Activated CD4-positive, alpha-beta T cell treated with anti-CD3 and anti-CD28 coated beads for 36 hours (primary cell): ENCODE measurements at regions of chr15 and their contacts with region 1.

Region 1: GRCh38 chr15:41774062-41774881 is at the start of gene MAPKBP1:
- DNase-seq: peak; percentile 99
- ATAC-seq: peak; percentile 88
- H3K4me3 Mint-ChIP-seq: peak within 1 kb of the TSS; percentile 90
- H3K27ac Mint-ChIP-seq: peak within 1 kb of the TSS; percentile 84
- H3K4me1 Mint-ChIP-seq: peaks cover 56% of the 10 kb centered on the region
- H3K27me3 Mint-ChIP-seq: no peaks in the 10 kb centered on the region
- total RNA-seq, gene MAPKBP1: 16.1 to 19.0 TPM

Region 2: DNA sequence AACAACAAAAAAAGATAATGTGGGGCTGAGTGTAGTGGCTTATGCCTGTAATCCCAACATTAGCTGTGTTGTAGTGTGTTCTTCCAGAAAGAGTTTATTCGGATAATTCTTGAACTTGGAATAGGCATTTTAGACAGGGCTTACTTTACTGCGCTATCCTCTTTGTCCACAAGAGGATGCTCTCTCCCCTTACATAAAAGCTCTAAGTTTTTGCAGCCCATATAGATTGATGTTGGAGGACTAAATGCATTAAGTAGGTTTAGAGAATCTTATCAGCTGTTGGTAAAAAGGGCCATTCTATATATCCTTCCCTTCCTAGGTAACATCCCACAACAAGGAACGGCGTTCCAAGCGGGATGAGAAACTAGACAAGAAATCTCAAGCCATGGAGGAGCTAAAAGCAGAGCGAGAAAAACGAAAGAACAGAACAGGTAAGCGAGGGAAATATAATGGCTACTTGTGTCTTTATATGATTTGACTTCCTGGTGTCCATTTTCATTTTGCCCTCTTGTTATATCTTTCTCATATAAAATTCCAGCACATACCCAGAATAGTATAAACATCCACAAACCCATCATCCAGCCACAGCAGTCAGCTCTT is 308.4 kb before region 1 on chr15:
- CTCF ChIA-PET with region 1: interaction called, 17 read pairs
- POLR2A ChIA-PET with region 1: no interaction called
- intact Hi-C with region 1: no loop called
- DNase-seq: peak; percentile 34
- ATAC-seq: peak; percentile 81
- H3K4me3 Mint-ChIP-seq: no peak overlapping the region
- H3K27ac Mint-ChIP-seq: no peak overlapping the region
- H3K4me1 Mint-ChIP-seq: no peaks in the 10 kb centered on the region
- H3K27me3 Mint-ChIP-seq: no peaks in the 10 kb centered on the region

Region 3: GRCh38 chr15:41557673-41558399 is 216.4 kb before region 1 on chr15:
- CTCF ChIA-PET with region 1: interaction called, 10 read pairs
- POLR2A ChIA-PET with region 1: no interaction called
- intact Hi-C with region 1: loop called in 1 of 2 experiments (anchors 1 kb)
- DNase-seq: peak; percentile 85
- ATAC-seq: peak; percentile 75
- H3K4me3 Mint-ChIP-seq: peak overlapping the region; percentile 69
- H3K27ac Mint-ChIP-seq: peak overlapping the region; percentile 45
- H3K4me1 Mint-ChIP-seq: peaks cover 20% of the 10 kb centered on the region
- H3K27me3 Mint-ChIP-seq: peaks cover 10% of the 10 kb centered on the region

Region 4: GRCh38 chr15:41790756-41791546 is 16.7 kb after region 1 on chr15:
- CTCF ChIA-PET with region 1: interaction called, 22 read pairs
- POLR2A ChIA-PET with region 1: no interaction called
- intact Hi-C with region 1: no loop called
- DNase-seq: no peak
- ATAC-seq: peak; percentile 30
- H3K4me3 Mint-ChIP-seq: no peak overlapping the region
- H3K27ac Mint-ChIP-seq: no peak overlapping the region
- H3K4me1 Mint-ChIP-seq: peaks cover 43% of the 10 kb centered on the region
- H3K27me3 Mint-ChIP-seq: no peaks in the 10 kb centered on the region

Region 5: DNA sequence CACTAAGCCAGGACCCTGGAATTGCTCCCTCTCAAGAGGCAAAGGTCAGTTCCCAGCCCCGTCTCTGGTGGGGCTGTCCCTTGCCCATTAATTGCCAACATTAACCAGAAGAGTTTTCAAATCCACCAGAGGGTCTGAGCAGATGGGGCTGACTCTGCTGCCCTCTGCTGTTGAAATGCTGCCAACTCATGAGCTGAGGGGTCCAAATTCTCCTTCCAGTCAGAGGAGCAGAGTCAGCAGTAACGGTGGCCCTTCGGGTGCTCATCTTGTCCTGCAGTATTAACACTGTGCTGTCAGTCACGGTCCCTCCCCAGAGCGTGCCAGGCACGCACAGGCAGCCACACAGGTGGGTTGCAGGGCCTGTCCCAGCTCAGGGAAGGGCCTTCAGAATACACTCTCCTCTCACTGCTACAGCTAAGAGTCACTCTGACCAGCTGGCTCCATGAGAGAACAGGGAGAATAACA is 130.3 kb after region 1 on chr15:
- CTCF ChIA-PET with region 1: interaction called, 28 read pairs
- POLR2A ChIA-PET with region 1: interaction called, 3 read pairs
- intact Hi-C with region 1: loop called (anchors 1 kb)
- DNase-seq: peak; percentile 81
- ATAC-seq: peak; percentile 92
- H3K4me3 Mint-ChIP-seq: no peak overlapping the region
- H3K27ac Mint-ChIP-seq: peak overlapping the region; percentile 4
- H3K4me1 Mint-ChIP-seq: peaks cover 5% of the 10 kb centered on the region
- H3K27me3 Mint-ChIP-seq: no peaks in the 10 kb centered on the region

Region 6: DNA sequence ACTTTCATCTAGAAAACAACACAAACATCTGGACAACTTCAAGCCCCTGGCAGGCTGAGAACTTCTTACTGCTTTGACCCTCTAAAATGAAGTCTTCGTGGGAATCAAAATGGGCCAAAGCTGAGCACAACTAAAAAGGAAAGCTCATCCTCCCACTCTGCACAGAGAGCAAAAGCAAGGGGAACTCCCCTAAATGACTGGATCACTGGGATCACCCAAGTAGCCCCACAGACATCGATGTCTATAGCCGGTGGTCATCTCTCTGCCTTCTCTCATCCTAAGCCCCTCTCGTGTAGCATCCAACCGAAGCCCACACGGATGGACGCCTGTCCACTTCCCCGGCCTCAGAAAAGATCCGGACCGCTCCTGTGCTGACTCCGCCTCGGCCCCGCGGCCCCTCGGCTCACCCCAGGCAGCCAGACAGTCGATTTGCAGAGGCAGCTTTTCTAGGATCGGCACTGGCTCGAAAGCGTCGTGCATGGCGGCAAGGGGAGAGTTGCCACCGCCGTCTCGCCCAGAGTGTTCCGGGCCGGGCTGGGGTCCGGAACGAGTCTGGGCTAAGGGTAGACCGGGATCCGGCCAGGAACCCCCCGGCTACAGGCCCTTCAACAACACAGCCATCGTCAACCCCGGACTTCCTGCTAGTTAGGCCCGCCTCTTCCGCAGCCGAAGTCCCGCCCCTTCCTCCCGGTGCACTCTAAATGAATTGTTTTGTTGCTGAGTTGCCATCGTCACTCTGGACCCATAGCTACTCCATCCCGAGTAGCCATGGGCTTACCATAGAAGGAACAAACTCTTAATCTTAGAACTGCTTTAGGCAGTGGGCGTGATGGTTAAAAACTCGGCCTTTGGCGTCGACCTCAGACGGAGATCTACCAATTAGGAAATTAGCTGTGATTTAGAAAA is 433.7 kb after region 1 on chr15 and contains the start of gene VPS39:
- CTCF ChIA-PET with region 1: no interaction called
- POLR2A ChIA-PET with region 1: no interaction called
- intact Hi-C with region 1: loop called in 1 of 2 experiments (anchors 1 kb)
- DNase-seq: peak; percentile 91
- ATAC-seq: peak; percentile 98
- H3K4me3 Mint-ChIP-seq: peak within 1 kb of the TSS; percentile 99
- H3K27ac Mint-ChIP-seq: peak within 1 kb of the TSS; percentile 97
- H3K4me1 Mint-ChIP-seq: peaks cover 32% of the 10 kb centered on the region
- H3K27me3 Mint-ChIP-seq: no peaks in the 10 kb centered on the region
- total RNA-seq, gene VPS39: 49.5 to 56.2 TPM